GM12878 (cell line): ENCODE measurements at regions of chr14 and their contacts with region 1.

Region 1: DNA sequence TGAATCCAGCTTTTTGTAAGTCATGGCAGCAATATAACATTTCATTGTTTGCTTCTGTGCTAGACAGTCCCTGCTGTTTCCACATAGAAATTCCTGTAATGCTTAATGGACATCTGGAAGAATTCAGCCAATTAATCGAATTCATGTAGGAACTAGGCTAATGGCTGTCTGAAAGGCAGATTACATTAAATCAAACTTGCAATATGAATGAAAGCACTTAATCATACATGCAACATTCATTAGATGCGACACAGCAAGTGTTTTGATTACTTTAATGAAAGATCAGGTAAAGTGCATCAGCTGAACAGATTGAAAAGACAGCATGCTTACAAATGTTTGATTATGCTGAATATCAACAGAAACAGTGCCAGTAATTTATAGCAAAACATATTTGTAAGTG is 24.1 kb upstream of the INSM2 start:
- DNase-seq: no peak
- ATAC-seq: no peak
- H3K4me3 ChIP-seq: no peak overlapping the region
- H3K27ac ChIP-seq: no peak overlapping the region
- H3K4me1 ChIP-seq: no peaks in the 10 kb centered on the region
- H3K27me3 ChIP-seq: no peaks in the 10 kb centered on the region
- CTCF ChIP-seq: no peak
- EP300 ChIP-seq: no peak
- POLR2A ChIP-seq: no peak
- RAD21 ChIP-seq: no peak

Region 2: DNA sequence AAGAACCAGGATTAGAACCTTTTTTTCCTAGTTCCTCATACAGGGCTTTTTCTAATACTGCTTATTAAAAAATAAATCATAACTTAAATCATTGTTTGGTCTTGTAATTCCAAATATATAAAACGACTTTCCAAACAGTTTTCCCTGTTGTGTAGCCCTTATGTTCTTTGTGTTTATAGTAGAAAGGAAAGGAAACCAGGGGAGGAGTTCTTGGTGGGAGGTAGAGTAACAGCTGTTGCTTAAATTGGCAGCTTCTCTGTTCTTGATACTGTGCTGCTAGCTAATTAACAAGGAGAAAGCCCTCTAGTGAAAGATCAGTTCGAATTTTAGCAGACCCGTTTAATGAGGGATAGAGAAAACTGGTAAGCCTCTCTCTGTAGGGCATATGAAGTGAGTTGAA is 512.1 kb before region 1 on chr14:
- CTCF ChIA-PET with region 1: no interaction called
- POLR2A ChIA-PET with region 1: interaction called, 10 read pairs
- RAD21 ChIA-PET with region 1: no interaction called
- SMC1A ChIA-PET with region 1: no interaction called
- in situ Hi-C with region 1: no loop called
- intact Hi-C with region 1: no loop called
- DNase-seq: no peak
- ATAC-seq: no peak
- H3K4me3 ChIP-seq: no peak overlapping the region
- H3K27ac ChIP-seq: no peak overlapping the region
- H3K4me1 ChIP-seq: peaks cover 5% of the 10 kb centered on the region
- H3K27me3 ChIP-seq: no peaks in the 10 kb centered on the region
- CTCF ChIP-seq: no peak
- EP300 ChIP-seq: no peak
- POLR2A ChIP-seq: no peak
- RAD21 ChIP-seq: no peak